ENCODE measurements at regions of chr15 and their contacts with region 1.

Region 1: DNA sequence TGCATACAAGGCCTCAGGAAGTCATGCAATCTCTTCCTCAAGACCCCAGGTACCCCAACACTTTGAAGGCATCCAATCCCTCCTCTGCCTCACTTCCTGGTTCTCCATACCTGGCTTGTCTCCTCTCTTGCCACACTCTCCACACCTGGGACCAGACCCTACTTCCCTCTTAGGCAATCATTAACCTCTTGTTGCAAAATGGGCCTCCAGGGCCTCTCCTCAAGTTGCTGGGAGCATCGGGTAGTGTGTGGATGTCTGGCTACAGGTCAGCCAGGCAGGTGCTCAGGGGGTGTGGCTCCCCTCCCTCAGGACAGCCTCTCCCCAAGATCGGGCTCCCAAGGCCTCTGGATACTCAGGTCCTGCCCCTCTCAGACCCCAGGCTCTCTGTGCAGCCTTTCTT is 8.6 kb downstream of the PLA2G4E start:
- DNase-seq: peak; percentile 92 to 96
- H3K4me3 ChIP-seq: no peak overlapping the region; the same call in 1 of the 2 replicates
- H3K4me3 Mint-ChIP-seq: peak overlapping the region; percentile 68
- H3K27ac Mint-ChIP-seq: peak overlapping the region; percentile 91
- H3K4me1 ChIP-seq: peaks cover 57% of the 10 kb centered on the region
- H3K4me1 Mint-ChIP-seq: peaks cover 49% of the 10 kb centered on the region
- H3K27me3 ChIP-seq: no peaks in the 10 kb centered on the region
- H3K27me3 Mint-ChIP-seq: no peaks in the 10 kb centered on the region
- CTCF ChIP-seq: no peak

Region 2: DNA sequence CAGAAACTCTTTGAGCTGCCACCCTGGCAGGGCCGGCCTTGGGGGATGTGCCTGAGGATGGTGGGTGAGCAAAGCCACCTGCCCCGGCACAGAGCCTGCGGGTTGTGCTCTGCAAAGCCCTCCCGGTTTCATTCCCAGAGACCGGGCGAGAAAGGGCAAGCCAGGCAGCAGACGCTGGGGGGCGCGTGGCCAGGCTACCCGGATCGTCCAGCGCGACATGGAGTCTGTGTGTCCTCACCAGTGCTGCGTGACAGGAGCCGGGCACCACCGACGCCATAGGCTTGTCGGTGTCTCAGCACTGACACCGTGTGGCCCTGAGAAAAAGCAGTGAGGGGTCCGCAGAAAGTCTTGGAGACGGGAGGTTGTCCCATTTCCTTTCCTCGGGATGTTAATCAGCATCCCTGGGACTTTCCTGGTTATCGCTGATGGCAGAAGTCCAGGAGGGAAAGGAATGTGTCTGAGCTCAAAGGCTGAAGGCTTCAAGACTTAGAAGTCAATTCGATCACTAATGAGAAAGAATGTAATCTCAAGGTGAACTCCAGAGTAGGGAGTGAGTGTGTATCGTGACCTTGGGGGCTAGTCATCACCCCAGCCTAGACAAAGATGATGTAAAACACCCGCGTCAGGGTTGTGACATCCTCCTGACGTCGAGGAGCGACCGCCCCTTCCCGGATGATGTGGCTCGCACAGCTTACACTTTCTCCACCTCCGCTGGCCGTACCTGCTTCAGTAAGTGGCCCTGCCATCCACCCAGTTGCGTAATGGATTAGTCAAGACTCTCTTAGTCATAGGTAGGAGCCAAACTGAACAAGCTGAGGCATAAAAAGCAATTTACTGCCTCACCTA is 44.9 kb after region 1 on chr15:
- CTCF ChIA-PET with region 1: interaction called, 5 read pairs
- POLR2A ChIA-PET with region 1: no interaction called
- intact Hi-C with region 1: loop called (anchors 1 kb)
- DNase-seq: peak; percentile 92 to 96
- H3K4me3 ChIP-seq: peak overlapping the region; percentile 33
- H3K4me3 Mint-ChIP-seq: peak overlapping the region; percentile 76
- H3K27ac Mint-ChIP-seq: peak overlapping the region; percentile 93
- H3K4me1 ChIP-seq: peaks cover 19% of the 10 kb centered on the region
- H3K4me1 Mint-ChIP-seq: peaks cover 7% of the 10 kb centered on the region
- H3K27me3 ChIP-seq: no peaks in the 10 kb centered on the region
- H3K27me3 Mint-ChIP-seq: no peaks in the 10 kb centered on the region
- CTCF ChIP-seq: peak; percentile 73 to 87

Region 3: DNA sequence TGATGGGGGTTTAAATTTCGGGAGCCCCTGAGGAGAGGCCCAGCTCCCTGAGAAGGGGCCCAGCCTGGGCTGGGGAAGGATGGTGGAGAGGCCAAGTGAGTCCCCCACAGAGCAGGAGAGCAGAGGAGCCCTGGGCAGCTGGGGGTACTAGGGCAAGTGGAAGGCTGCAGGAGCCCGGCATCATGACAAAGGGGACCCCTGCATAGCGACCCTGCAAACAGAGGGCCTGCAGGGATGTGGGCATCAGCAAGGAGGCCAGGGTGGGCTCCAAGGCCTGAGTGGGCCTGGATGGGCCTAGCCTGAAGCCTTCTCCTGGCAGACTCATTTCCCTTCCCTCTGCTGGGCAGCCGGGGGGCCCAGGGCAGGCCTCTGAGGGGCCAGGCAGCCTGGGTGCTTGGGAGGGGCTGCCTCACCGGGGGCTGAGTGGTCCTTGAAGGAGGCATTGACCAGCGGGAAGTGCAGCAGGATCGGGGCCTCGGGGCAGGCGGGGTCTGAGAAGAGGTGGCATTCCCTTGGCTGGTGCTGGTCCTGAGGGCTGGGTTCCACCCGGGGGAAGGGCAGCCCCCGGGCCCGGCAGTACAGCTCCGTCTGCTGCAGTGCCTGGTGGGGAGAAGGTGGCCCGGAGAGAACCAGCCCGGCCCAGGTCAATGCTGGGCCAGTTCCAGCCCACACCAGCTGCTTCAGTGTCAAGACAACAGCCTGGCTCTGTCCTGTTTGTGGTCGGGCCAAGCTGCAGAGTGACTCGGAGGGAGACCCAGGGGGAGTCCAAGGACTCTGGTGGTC is 57.4 kb after region 1 on chr15:
- CTCF ChIA-PET with region 1: no interaction called
- POLR2A ChIA-PET with region 1: no interaction called
- intact Hi-C with region 1: no loop called
- DNase-seq: no peak
- H3K4me3 ChIP-seq: no peak overlapping the region
- H3K4me3 Mint-ChIP-seq: no peak overlapping the region
- H3K27ac Mint-ChIP-seq: no peak overlapping the region
- H3K4me1 ChIP-seq: peaks cover 18% of the 10 kb centered on the region
- H3K4me1 Mint-ChIP-seq: no peaks in the 10 kb centered on the region
- H3K27me3 ChIP-seq: no peaks in the 10 kb centered on the region
- H3K27me3 Mint-ChIP-seq: no peaks in the 10 kb centered on the region
- CTCF ChIP-seq: no peak